ENCODE measurements at regions of chr21 and their contacts with region 1.

Region 1: DNA sequence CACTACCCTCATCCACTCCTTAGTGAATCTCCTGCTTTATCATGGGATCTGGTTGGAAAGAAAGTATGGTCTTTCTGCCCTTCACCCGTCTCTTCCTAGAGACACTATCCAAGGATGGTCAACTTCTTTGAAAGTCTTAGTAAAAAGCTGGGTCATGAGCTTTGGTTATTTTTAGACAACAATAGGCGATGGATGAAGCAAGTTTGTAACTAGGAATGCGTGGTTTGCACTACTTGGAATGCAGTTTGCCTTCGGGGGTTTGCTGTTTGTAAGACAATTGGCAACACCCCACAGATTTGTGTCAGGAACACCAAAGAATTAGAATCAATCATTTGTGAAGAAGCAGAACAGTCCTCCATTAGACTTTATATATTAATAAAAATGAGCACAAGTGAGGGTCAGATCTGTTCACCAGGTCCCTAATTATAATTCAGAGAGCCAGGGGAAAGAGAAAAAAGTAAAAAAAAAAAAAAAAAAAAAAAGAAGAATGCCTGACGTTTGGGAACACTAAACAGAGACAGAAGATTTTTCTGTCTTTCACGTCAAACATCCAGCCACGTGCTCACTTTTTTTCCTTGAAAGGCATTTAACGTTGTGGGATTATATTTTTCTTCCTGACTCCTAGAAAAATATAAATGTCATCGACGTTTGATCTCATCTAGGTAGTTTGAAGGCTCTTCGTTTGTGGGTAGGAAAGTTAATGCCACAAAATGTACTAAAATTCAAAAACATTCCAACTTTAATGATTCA is 60.7 kb upstream of the BTG3 start:
- DNase-seq: no peak
- ATAC-seq: no peak
- H3K4me3 ChIP-seq: no peak overlapping the region
- H3K27ac ChIP-seq: no peak overlapping the region
- H3K4me1 ChIP-seq: no peaks in the 10 kb centered on the region
- H3K27me3 ChIP-seq: no peaks in the 10 kb centered on the region
- CTCF ChIP-seq: no peak
- POLR2A ChIP-seq: no peak

Region 2: DNA sequence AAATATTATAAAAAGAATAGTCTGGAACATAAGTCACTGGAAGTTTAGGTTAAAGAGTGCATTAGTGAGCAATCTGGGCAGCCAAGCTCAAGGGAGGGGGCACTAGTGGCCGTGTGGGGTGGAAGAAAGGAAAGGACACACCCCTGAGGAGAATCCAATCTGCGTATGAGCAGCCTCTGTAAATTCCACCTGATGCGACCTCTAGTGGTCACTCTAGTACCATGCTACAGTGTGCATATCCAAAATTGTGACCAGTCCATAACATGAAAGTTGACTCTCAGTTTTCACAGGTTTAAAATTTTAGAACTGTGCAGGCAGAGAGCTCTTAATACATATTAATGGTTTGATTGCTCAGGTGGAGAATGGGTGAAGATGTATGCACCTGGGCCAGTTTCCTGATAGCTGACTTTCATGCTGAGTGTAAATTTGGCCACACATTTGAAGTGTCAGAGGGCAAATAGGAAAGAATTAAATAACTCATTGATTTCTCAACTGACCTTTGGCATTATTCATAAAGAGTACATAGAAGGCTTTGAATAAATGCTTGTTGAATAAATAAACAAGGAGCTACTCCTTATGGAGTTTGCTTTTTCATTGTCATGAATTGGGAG is 251.7 kb after region 1 on chr21:
- intact Hi-C with region 1: loop called (anchors 5 kb)
- DNase-seq: peak; percentile 55 to 67 (median 65)
- ATAC-seq: peak; percentile 87
- H3K4me3 ChIP-seq: no peak overlapping the region
- H3K27ac ChIP-seq: no peak overlapping the region
- H3K4me1 ChIP-seq: no peaks in the 10 kb centered on the region
- H3K27me3 ChIP-seq: no peaks in the 10 kb centered on the region
- CTCF ChIP-seq: peak; percentile 64 to 80 (median 75)
- POLR2A ChIP-seq: no peak

Region 3: GRCh38 chr21:18147678-18148077 is 474.2 kb after region 1 on chr21:
- intact Hi-C with region 1: no loop called
- DNase-seq: no peak
- ATAC-seq: no peak
- H3K4me3 ChIP-seq: no peak overlapping the region
- H3K27ac ChIP-seq: no peak overlapping the region
- H3K4me1 ChIP-seq: no peaks in the 10 kb centered on the region
- H3K27me3 ChIP-seq: no peaks in the 10 kb centered on the region
- CTCF ChIP-seq: no peak
- POLR2A ChIP-seq: no peak